ENCODE measurements at regions of chrX and their contacts with region 1.

Region 1: GRCh38 chrX:75273483-75273882 is 402 bp upstream of the UPRT start:
- DNase-seq: no peak
- H3K4me3 ChIP-seq: peak overlapping the region; percentile 33 to 76 (median 71)
- H3K27ac ChIP-seq: peak overlapping the region; percentile 1
- H3K4me1 ChIP-seq: peaks cover 4% of the 10 kb centered on the region
- H3K27me3 ChIP-seq: no peaks in the 10 kb centered on the region
- CTCF ChIP-seq: no peak
- POLR2A ChIP-seq: no peak

Region 2: GRCh38 chrX:75156021-75156945 is 117.2 kb before region 1 on chrX and contains the start of gene ABCB7:
- CTCF ChIA-PET with region 1: no interaction called
- POLR2A ChIA-PET with region 1: interaction called, 4 read pairs
- dilution Hi-C with region 1: no loop called
- intact Hi-C with region 1: loop called (anchors 5 kb)
- DNase-seq: peak; percentile 63
- H3K4me3 ChIP-seq: peak within 1 kb of the TSS; percentile 53 to 83 (median 66)
- H3K27ac ChIP-seq: peak within 1 kb of the TSS; percentile 60
- H3K4me1 ChIP-seq: peaks cover 4% of the 10 kb centered on the region
- H3K27me3 ChIP-seq: no peaks in the 10 kb centered on the region
- CTCF ChIP-seq: peak in 1 of 2 donors; percentile 11
- POLR2A ChIP-seq: peak; percentile 48
- total RNA-seq, gene ABCB7: 20.7 and 22.0 TPM in 2 replicates

Measured in endothelial cell of umbilical vein (primary cell).